ENCODE measurements at regions of chr15 and their contacts with region 1.

Region 1: GRCh38 chr15:84035399-84035766 is 200.2 kb upstream of the GOLGA6L4 start:
- DNase-seq: peak; percentile 70
- ATAC-seq: peak; percentile 80
- H3K4me3 ChIP-seq: no peak overlapping the region
- H3K27ac ChIP-seq: no peak overlapping the region
- H3K4me1 ChIP-seq: peaks cover 9% of the 10 kb centered on the region
- H3K27me3 ChIP-seq: no peaks in the 10 kb centered on the region
- CTCF ChIP-seq: peak; percentile 67

Region 2: GRCh38 chr15:83564975-83565532 is 470.3 kb before region 1 on chr15:
- CTCF ChIA-PET with region 1: interaction called, 3 read pairs
- POLR2A ChIA-PET with region 1: interaction called, 7 read pairs
- intact Hi-C with region 1: loop called (anchors 2 kb)
- DNase-seq: no peak
- ATAC-seq: no peak
- H3K4me3 ChIP-seq: no peak overlapping the region
- H3K27ac ChIP-seq: no peak overlapping the region
- H3K4me1 ChIP-seq: peaks cover 7% of the 10 kb centered on the region; the same call in 1 of the 2 replicates
- H3K27me3 ChIP-seq: no peaks in the 10 kb centered on the region
- CTCF ChIP-seq: no peak

Region 3: DNA sequence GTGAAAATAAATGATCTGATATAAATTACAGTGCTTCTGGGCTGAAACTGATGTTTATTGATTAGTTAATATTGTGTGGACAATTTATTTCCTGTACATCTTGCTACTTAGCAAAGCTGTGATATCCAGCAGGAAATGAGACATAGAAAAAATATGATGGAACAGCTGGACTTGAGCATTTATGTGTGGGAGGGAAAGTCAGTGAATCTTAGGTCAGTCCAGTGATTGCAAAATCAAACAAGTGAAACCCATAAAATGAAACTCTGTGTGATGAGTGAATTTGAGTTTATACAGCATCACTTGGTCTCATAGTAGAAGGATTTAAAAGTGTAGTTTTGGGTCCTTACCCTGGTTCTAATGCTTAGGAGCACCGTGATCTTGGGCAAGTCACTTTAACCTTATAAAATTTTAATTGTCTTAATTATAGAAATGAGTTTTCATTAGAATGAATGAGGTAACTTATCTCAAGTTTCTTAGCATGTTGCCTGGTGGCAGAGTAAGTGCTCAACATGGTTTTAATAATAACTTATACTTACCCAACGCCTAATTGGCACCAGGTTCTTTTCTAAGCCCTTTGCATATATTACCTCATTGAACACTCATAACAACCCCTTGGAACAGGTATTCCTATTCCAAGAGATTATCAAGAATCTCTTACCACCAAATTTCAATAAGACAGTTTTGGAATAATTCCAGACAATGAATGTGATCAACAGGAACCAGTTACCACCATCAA is 186.9 kb before region 1 on chr15:
- CTCF ChIA-PET with region 1: no interaction called
- POLR2A ChIA-PET with region 1: no interaction called
- intact Hi-C with region 1: no loop called
- DNase-seq: peak; percentile 82
- ATAC-seq: peak; percentile 67
- H3K4me3 ChIP-seq: no peak overlapping the region
- H3K27ac ChIP-seq: peak overlapping the region; percentile 55
- H3K4me1 ChIP-seq: peaks cover 32% of the 10 kb centered on the region
- H3K27me3 ChIP-seq: no peaks in the 10 kb centered on the region
- CTCF ChIP-seq: no peak

Region 4: GRCh38 chr15:83930392-83931205 is 104.8 kb before region 1 on chr15:
- CTCF ChIA-PET with region 1: no interaction called
- POLR2A ChIA-PET with region 1: no interaction called
- intact Hi-C with region 1: loop called (anchors 10 kb)
- DNase-seq: peak; percentile 64
- ATAC-seq: peak; percentile 82
- H3K4me3 ChIP-seq: no peak overlapping the region
- H3K27ac ChIP-seq: peak overlapping the region; percentile 27
- H3K4me1 ChIP-seq: peaks cover 15% of the 10 kb centered on the region; the same call in 1 of the 2 replicates
- H3K27me3 ChIP-seq: no peaks in the 10 kb centered on the region
- CTCF ChIP-seq: no peak